Esophagus muscularis mucosa (tissue), 4 donors: ENCODE measurements at regions of chrX and their contacts with region 1.

Region 1: GRCh38 chrX:133335027-133335426 is 80.3 kb downstream of the GPC4 start:
- DNase-seq: no peak
- H3K4me3 ChIP-seq: no peak overlapping the region
- H3K27ac ChIP-seq: no peak overlapping the region
- H3K4me1 ChIP-seq: peaks cover 0 to 60% (median 43%) of the 10 kb centered on the region in 4 donors
- H3K27me3 ChIP-seq: no peaks in the 10 kb centered on the region
- CTCF ChIP-seq: peak; percentile 44 to 49 (median 44)
- EP300 ChIP-seq: no peak
- POLR2A ChIP-seq: no peak

Region 2: GRCh38 chrX:133375615-133376340 is 40.8 kb after region 1 on chrX:
- intact Hi-C with region 1: no loop called
- DNase-seq: no peak
- H3K4me3 ChIP-seq: no peak overlapping the region
- H3K27ac ChIP-seq: peak overlapping the region; percentile 19 to 64 (median 30)
- H3K4me1 ChIP-seq: peaks cover 3 to 71% (median 54%) of the 10 kb centered on the region in 4 donors
- H3K27me3 ChIP-seq: no peaks in the 10 kb centered on the region
- CTCF ChIP-seq: no peak
- EP300 ChIP-seq: no peak
- POLR2A ChIP-seq: no peak

Region 3: DNA sequence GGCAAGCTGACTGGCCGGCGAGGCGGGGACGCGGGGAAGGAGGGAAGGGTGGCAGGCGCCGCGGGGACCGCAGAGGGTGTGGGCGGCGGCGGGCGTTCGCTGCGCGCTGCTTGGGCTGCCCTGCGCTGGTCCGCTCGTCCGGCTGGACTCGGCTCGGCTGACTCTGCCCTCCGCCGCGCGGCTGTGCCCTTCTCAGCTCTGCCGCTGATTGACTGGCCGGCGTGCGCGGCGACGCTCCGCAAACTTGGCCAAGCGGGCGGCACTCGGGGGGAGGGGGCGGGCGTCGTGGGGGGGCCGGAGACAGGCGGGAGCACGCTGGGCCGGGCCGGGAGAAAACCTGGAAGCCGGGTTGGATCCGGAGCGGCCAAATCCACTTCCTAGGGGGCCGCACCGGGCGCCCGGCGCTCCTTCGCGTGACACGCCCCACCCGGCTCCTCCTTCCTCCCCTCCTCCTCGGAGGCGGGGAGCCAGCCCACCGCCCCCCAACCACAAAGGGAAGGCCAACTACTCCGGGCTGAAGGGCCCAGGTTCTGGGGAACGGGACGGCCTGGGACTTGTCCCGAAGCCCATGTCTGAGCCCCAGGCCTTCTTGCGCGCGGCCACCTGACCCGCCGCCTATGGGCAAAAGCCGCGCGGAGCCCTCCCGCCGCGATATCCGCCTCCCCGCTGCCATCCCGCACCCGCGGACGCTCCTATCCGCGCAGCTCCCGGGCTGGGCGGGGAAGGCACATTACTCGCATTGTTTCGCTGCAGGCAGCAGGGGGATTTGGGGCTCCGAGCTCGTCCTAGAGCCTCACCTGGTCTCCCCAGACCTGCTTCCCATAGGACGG is 80.5 kb after region 1 on chrX and contains the start of gene GPC4:
- intact Hi-C with region 1: loop called (anchors 5 kb)
- DNase-seq: peak; percentile 91
- H3K4me3 ChIP-seq: peak within 1 kb of the TSS; percentile 66 to 83 (median 70)
- H3K27ac ChIP-seq: peak within 1 kb of the TSS; percentile 80 to 90 (median 88)
- H3K4me1 ChIP-seq: peaks cover 0 to 29% (median 16%) of the 10 kb centered on the region in 4 donors
- H3K27me3 ChIP-seq: no peaks in the 10 kb centered on the region
- CTCF ChIP-seq: no peak
- EP300 ChIP-seq: no peak
- POLR2A ChIP-seq: no peak
- total RNA-seq, gene GPC4: 54.3 to 91.2 (median 80.3) TPM

Region 4: GRCh38 chrX:133495464-133496391 is 160.7 kb after region 1 on chrX:
- intact Hi-C with region 1: loop called (anchors 10 kb)
- DNase-seq: no peak
- H3K4me3 ChIP-seq: peak overlapping the region in 2 of 4 donors; percentile 25 to 42
- H3K27ac ChIP-seq: peak overlapping the region; percentile 54 to 84 (median 82)
- H3K4me1 ChIP-seq: peaks cover 5 to 38% (median 25%) of the 10 kb centered on the region in 4 donors
- H3K27me3 ChIP-seq: no peaks in the 10 kb centered on the region
- CTCF ChIP-seq: no peak
- EP300 ChIP-seq: no peak
- POLR2A ChIP-seq: no peak

Region 5: GRCh38 chrX:133645977-133646718 is 311.1 kb after region 1 on chrX:
- intact Hi-C with region 1: no loop called
- DNase-seq: no peak
- H3K4me3 ChIP-seq: no peak overlapping the region
- H3K27ac ChIP-seq: peak overlapping the region in 2 of 4 donors; percentile 17 to 51
- H3K4me1 ChIP-seq: peaks cover 0 to 8% (median 0%) of the 10 kb centered on the region in 4 donors
- H3K27me3 ChIP-seq: no peaks in the 10 kb centered on the region
- CTCF ChIP-seq: no peak
- EP300 ChIP-seq: no peak
- POLR2A ChIP-seq: no peak

Region 6: DNA sequence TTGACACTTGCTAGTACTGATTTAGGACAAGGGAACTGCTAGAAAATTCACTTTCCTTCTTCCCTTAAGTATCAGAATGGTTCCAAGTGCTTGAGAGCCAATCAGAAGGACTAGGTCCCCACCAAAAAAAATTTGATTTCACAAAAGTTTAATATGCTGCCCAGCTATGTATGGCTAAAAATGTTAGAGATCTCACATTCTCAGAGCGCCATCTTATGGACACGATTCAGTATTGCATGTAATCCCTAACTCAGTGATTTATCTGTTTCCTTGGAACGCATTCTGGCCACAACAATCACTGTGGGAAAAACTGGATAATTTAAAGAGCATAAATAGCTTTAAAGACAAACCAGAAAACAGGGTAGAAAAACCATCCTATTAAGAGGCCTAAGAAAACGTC is 335.4 kb after region 1 on chrX:
- intact Hi-C with region 1: loop called (anchors 5 kb)
- DNase-seq: no peak
- H3K4me3 ChIP-seq: no peak overlapping the region
- H3K27ac ChIP-seq: peak overlapping the region in 2 of 4 donors; percentile 33 to 60
- H3K4me1 ChIP-seq: peaks cover 0 to 43% (median 24%) of the 10 kb centered on the region in 4 donors
- H3K27me3 ChIP-seq: no peaks in the 10 kb centered on the region
- CTCF ChIP-seq: peak; percentile 64 to 72 (median 70)
- EP300 ChIP-seq: no peak
- POLR2A ChIP-seq: no peak